Tibial artery (tissue), 4 donors: ENCODE measurements at regions of chr5 and their contacts with region 1.

Region 1: DNA sequence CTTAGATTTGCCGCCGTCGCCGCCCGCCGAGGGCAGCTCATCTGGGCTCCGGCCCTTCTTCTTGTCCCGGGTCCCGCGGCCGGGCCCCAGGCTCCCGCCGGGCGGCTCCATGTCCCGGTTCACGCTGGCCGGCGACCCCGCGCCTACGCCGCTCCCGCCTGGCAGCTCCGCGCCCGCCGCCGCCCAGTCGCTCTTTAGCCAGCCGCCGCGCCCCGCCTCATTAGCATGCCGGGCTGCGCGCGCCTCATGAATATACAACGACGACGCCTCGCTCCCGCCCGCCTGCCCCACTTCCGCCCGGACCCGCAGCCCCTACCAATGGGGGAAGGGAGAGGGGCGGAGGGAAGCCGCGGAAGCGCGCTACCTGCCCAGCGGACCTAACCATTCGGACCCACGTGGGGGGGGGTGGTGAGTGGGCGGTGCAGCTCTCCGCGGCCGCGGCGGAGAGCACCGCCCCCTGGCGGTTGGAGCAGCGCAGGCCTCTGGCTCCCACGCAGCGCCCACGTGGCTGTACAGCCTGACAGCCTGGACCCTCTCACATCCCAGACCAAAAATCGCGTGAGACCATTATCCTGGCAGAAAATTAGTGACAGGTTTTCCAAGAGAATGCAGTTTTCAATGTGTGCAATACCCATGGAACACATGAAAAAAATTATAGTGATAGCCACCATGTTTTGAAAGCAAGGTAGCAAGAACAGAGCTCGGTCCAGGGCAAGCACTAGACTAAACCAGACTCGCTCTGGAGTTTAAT is at the start of gene DIAPH1:
- DNase-seq: peak; percentile 98 to 99
- H3K4me3 ChIP-seq: peak within 1 kb of the TSS; percentile 69 to 97
- H3K27ac ChIP-seq: peak within 1 kb of the TSS; percentile 86 to 97
- H3K4me1 ChIP-seq: peaks cover 0 to 39% (median 14%) of the 10 kb centered on the region in 4 donors
- H3K27me3 ChIP-seq: no peaks in the 10 kb centered on the region
- CTCF ChIP-seq: peak; percentile 98 to 99

Region 2: GRCh38 chr5:141570655-141571054 is 48.3 kb before region 1 on chr5:
- intact Hi-C with region 1: loop called (anchors 10 kb)
- DNase-seq: no peak
- H3K4me3 ChIP-seq: no peak overlapping the region
- H3K27ac ChIP-seq: no peak overlapping the region
- H3K4me1 ChIP-seq: peaks cover 0 to 5% (median 0%) of the 10 kb centered on the region in 4 donors
- H3K27me3 ChIP-seq: no peaks in the 10 kb centered on the region
- CTCF ChIP-seq: no peak

Region 3: DNA sequence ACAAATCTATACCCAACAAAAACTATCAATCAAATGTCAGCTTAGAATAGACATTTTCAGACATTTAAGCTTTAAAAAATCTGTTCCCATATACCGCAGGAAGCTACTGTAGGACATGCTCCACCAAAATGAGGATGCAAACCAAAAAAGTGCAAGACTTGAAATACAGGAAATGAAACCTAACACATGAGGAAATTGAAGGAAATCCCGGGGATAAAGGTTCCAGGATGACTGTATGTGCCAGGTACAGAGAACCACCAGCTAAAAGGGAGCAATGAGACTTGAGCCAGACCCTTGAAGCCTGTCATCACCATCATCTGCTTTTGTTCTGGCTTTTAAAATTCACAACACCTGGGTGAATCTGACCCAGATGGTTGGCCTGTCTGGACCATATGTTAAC is 21.6 kb before region 1 on chr5:
- intact Hi-C with region 1: loop called (anchors 1 kb)
- DNase-seq: no peak
- H3K4me3 ChIP-seq: no peak overlapping the region
- H3K27ac ChIP-seq: no peak overlapping the region
- H3K4me1 ChIP-seq: peaks cover 0 to 33% (median 10%) of the 10 kb centered on the region in 4 donors
- H3K27me3 ChIP-seq: no peaks in the 10 kb centered on the region
- CTCF ChIP-seq: no peak